Activated T-helper 1 cell treated with anti-CD3 and anti-CD28 coated beads, Interleukin-12 subunit alpha, Interleukin-12 subunit beta, Interleukin-2, Interleukin-4 antibody, amounts not matched to agents 30 ng/mL and 10 ng/mL and 1 ng/mL, durations not matched to agents 14 hours and 24 hours and 36 hours (primary cell): ENCODE measurements at regions of chr20 and their contacts with region 1.

Region 1: GRCh38 chr20:23361598-23362384 is at the start of gene GZF1:
- DNase-seq: peak; percentile 98
- H3K4me3 Mint-ChIP-seq: peak within 1 kb of the TSS; percentile 96
- H3K27ac Mint-ChIP-seq: peak within 1 kb of the TSS; percentile 92
- H3K4me1 Mint-ChIP-seq: peaks cover 56% of the 10 kb centered on the region
- H3K27me3 Mint-ChIP-seq: peaks cover 1% of the 10 kb centered on the region
- total RNA-seq, gene GZF1: 10.6 and 12.6 TPM in 2 replicates

Region 2: GRCh38 chr20:23381876-23382275 is 20.1 kb after region 1 on chr20:
- intact Hi-C with region 1: loop called (anchors 2 kb)
- DNase-seq: no peak
- H3K4me3 Mint-ChIP-seq: no peak overlapping the region
- H3K27ac Mint-ChIP-seq: no peak overlapping the region
- H3K4me1 Mint-ChIP-seq: peaks cover 17% of the 10 kb centered on the region
- H3K27me3 Mint-ChIP-seq: no peaks in the 10 kb centered on the region

Region 3: DNA sequence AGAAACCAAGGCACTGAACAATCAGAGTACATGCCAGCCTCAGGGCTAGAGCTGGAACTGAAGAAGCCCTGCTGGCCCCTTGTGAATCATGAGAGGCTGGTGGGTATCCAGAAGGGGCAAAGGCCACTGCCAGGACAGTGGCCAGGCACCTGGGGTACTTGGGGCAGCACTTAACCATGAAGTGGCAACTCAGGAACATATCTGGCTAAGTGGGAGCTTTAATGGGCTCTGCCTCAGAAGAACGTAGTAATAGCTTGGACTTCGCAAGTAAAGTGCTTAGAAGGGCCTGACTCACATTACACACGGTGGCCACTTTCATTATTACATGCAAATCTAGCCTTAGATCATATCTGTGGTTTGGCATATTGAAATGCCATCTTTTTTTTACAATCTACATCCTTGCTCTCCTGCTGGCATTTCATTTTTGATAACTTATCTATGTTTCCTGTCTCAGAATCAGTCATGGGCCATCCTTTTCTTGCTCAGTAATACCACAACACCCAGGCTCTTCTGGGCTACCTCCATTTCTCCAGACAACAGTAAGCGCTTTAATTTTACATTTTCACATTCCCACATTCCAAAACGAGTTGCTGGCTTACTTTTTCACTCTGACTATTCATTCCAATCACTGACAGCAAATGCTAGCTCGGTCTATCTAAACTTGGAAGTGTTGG is 37.9 kb after region 1 on chr20:
- intact Hi-C with region 1: loop called (anchors 1 kb)
- DNase-seq: no peak
- H3K4me3 Mint-ChIP-seq: peak overlapping the region; percentile 65
- H3K27ac Mint-ChIP-seq: peak overlapping the region; percentile 56
- H3K4me1 Mint-ChIP-seq: peaks cover 62% of the 10 kb centered on the region
- H3K27me3 Mint-ChIP-seq: no peaks in the 10 kb centered on the region

Region 4: DNA sequence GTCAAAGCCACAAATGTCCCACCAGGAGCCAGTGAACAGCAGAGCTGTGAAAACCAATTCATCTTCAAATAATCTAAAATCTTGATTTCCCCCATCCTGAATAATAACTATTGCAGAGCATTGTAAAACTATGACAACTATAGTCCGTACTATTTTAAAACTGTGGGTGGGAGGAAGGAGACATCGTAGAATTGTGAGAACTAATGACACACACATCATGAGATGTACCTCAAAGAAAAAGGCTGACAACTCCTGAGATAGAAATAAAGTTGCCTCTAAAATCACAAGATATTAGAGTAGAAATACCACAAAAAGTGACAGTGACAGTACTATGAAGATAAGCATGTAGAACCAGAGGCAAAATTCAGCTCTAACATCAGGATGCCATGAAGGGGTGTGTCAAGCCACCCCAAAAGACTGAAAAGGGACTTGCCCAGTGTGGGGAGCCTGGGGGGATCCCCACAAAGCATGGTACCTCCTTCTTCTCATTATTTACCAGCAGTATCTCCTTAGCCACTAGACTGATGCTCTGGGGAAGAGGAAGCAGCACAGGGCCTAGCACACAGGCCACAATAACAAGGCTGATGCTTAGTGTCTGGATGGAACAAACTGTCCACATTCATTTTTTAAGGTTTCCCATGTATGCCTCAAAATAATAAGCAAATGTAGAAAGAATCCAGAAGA is 46.1 kb after region 1 on chr20:
- intact Hi-C with region 1: loop called (anchors 2 kb)
- DNase-seq: peak; percentile 60
- H3K4me3 Mint-ChIP-seq: peak overlapping the region; percentile 60
- H3K27ac Mint-ChIP-seq: peak overlapping the region; percentile 91
- H3K4me1 Mint-ChIP-seq: peaks cover 85% of the 10 kb centered on the region
- H3K27me3 Mint-ChIP-seq: no peaks in the 10 kb centered on the region

Region 5: DNA sequence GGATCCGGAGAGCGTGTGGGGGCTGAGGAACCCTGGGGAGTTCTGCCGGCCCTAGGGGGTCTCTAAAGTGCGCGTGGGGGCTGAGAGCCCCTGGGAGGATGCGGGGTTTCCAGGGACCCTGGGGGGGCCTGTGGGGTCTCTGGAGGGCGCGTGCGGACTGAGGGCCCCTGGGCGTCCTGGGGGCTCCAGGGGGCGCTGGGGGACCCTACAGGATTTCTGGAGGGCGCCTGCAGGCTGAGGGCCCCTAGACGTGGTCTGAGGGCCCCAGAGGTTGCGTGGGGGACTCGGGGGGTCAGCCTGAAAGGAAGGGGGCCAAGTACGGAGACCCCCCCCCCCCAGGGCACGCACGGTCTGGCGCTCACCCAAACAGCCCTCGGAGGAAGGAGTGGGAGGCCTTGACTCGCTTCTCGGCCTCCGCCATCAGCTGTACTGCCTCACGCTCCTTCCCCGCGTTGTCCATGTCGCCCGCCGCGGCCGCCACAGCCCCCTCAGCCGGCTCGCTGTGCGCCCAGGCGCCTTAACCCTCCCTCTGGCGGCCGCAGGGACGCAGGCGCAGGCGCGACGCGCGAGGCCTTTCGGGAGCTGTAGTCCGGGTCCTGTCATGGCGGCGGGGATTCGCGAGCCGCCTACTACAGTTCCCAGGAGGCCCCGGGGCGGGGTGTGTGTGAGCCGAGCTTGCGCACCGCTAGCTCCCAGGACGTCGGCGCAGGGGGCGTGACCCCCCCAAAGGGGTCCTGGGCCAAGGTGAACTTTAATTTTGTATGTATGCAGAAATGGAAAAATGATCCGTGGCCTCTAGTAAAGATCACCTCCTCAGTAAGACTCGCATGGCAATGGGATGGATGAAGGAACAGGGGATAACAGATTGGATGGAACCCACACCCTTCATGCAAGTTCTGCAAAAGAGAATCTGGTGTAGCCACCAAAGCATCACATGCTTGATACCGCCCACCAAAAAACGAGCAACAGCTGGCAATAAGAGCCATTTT is 59.4 kb after region 1 on chr20 and contains the start of gene NAPB:
- intact Hi-C with region 1: loop called (anchors 1 kb)
- DNase-seq: peak; percentile 92
- H3K4me3 Mint-ChIP-seq: peak within 1 kb of the TSS; percentile 97
- H3K27ac Mint-ChIP-seq: peak within 1 kb of the TSS; percentile 81
- H3K4me1 Mint-ChIP-seq: peaks cover 49% of the 10 kb centered on the region
- H3K27me3 Mint-ChIP-seq: no peaks in the 10 kb centered on the region
- total RNA-seq, gene NAPB: 14.0 and 15.5 TPM in 2 replicates

Region 6: DNA sequence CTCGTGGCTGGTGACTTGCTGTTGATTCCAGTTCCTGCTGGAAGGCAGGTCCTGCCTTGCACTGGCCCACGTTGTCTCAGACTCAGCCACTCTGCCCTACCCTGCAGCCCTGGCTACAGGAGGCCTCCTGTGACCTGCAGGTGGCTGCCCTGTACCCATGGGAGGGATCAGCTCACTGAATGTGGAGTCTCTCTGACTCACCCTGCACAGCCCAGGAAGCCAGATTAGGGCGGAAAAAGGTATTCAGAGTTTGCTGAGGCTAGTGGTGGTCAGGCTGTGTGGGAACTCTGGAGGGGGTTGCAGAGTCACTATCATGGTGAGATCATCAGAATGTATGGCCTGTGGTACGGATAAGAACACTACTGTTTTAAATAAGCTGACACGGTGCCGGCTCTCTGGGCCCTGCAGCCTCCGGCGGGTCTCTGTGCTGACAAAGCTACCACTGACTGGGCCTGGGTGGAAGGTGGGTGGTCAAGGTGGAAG is 1861.4 kb after region 1 on chr20:
- intact Hi-C with region 1: no loop called
- DNase-seq: no peak
- H3K4me3 Mint-ChIP-seq: no peak overlapping the region
- H3K27ac Mint-ChIP-seq: peak overlapping the region; percentile 26
- H3K4me1 Mint-ChIP-seq: peaks cover 6% of the 10 kb centered on the region
- H3K27me3 Mint-ChIP-seq: no peaks in the 10 kb centered on the region